Activated CD8-positive, alpha-beta T cell treated with anti-CD3 and anti-CD28 coated beads for 36 hours (primary cell): ENCODE measurements at regions of chr17 and their contacts with region 1.

Region 1: GRCh38 chr17:5191541-5192417 is at the start of gene ZNF594:
- DNase-seq: peak; percentile 98
- ATAC-seq: peak; percentile 100
- H3K4me3 Mint-ChIP-seq: peak within 1 kb of the TSS; percentile 94
- H3K27ac Mint-ChIP-seq: peak within 1 kb of the TSS; percentile 94
- H3K4me1 Mint-ChIP-seq: peaks cover 31% of the 10 kb centered on the region
- H3K27me3 Mint-ChIP-seq: no peaks in the 10 kb centered on the region
- CTCF ChIP-seq: peak; percentile 78
- total RNA-seq, gene ZNF594: 7.7 to 8.7 TPM

Region 2: GRCh38 chr17:5181509-5182305 is 10.1 kb before region 1 on chr17:
- CTCF ChIA-PET with region 1: interaction called, 4 read pairs
- POLR2A ChIA-PET with region 1: interaction called, 14 read pairs
- intact Hi-C with region 1: no loop called
- DNase-seq: no peak
- ATAC-seq: no peak
- H3K4me3 Mint-ChIP-seq: no peak overlapping the region
- H3K27ac Mint-ChIP-seq: no peak overlapping the region
- H3K4me1 Mint-ChIP-seq: no peaks in the 10 kb centered on the region
- H3K27me3 Mint-ChIP-seq: no peaks in the 10 kb centered on the region
- CTCF ChIP-seq: no peak

Region 3: DNA sequence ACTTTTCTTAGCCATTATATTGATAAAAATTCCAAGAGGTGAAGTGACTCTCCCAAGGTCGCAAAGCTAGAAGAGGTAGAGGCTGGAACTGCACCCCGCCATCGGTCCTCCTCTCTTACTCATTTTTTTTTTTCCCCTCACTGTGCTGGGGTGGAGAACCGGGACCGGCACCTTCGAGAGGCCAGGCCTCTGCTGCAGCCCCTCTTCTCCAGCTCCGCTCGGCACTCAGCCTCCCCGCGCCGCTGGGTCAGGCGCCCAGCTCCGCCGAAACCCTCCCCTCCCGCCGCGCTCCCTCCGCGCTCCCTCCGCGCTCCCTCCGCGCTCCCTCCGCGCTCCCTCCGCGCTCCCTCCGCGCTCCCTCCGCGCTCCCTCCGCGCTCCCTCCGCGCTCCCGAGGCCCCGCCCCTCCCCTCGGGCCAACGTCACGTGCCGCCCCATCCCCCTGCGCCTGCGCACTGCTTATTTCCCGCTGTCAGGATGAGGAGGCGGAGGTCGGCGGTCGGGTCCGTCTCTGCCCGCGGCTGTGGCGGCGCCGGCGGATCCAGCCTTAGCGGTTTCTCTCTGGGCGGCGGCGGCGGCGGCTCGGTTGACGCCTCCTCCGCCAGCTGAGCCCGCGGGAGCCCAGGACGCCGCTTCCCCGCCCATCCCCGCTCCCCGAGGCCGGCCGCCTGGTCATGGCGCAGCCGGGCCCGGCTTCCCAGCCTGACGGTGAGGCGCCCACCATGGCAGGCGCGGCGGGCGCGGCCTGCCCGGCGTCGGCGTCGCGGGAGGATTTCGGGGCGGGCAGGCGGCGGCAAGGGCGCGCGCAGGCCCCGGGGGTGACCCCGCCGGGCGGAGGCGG is 90.3 kb after region 1 on chr17 and contains the start of gene RABEP1:
- CTCF ChIA-PET with region 1: no interaction called
- POLR2A ChIA-PET with region 1: interaction called, 5 read pairs
- intact Hi-C with region 1: loop called (anchors 10 kb)
- DNase-seq: peak; percentile 91
- ATAC-seq: peak; percentile 83
- H3K4me3 Mint-ChIP-seq: peak within 1 kb of the TSS; percentile 82
- H3K27ac Mint-ChIP-seq: peak within 1 kb of the TSS; percentile 92
- H3K4me1 Mint-ChIP-seq: peaks cover 27% of the 10 kb centered on the region
- H3K27me3 Mint-ChIP-seq: no peaks in the 10 kb centered on the region
- CTCF ChIP-seq: peak; percentile 42
- total RNA-seq, gene RABEP1: 58.7 to 60.6 TPM